Endothelial cell of umbilical vein (primary cell): ENCODE measurements at regions of chr12 and their contacts with region 1.

Region 1: DNA sequence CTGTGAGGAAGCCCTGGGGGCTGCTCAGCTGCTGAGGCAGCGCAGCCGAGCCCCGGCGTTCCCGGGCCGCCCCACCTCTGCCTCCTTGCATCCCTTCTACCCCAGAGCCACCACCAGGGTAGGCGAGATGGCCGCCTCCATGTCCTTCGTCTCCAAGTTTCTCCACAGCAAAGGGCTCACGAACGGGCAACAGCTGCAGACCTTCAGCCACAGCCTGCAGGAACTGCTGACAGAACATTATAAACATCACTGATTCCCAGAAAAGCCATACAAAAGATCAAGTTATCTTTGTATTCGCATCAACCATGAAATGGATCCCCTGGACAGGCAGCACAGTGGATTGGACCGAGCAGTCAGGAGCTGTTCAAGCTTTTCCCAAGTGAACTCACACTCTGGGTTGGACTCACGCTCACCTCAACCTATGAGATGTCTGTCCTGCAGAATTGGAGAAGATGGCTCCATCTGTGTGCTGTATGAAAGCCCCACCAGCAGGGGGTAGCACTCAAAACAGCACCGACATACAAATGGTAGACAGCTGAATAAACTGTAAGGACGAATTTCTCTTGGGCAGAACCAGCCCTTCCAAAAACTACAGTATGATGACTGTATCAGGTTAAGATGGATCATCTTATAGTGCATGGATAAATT is 19.4 kb upstream of the A2M start:
- DNase-seq: peak; percentile 11
- H3K4me3 ChIP-seq: no peak overlapping the region
- H3K27ac ChIP-seq: no peak overlapping the region
- H3K4me1 ChIP-seq: no peaks in the 10 kb centered on the region
- H3K27me3 ChIP-seq: peaks cover 2 to 3% of the 10 kb centered on the region in 2 experiments
- CTCF ChIP-seq: peak; percentile 35 to 39
- POLR2A ChIP-seq: no peak

Region 2: DNA sequence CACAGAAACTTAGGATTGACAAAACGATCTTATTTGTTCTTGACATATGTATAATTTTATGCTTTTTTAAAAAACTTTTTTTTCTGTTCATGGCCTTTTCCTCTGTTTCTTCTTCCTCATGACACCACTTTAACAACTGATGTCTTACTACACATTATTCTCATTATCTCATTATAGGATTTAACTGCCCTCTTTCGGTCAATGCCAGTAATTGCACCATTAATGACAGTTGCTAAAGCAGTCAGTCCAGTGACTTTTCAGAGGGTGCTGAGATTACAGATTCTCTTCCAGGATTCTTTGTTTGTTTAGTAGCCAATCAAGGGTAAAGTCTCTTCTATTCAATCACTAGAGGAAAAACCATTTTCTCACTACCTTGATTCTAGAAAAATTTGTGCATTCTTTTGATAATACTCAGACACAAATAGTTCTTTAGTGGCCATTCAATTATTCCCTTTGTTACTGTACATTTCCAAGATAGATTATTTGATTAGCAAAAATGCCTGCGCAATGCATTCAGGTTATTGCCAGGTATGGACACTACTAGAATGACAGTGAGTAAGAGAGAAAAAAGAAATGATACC is 95.6 kb before region 1 on chr12:
- CTCF ChIA-PET with region 1: no interaction called
- POLR2A ChIA-PET with region 1: no interaction called
- dilution Hi-C with region 1: no loop called
- intact Hi-C with region 1: no loop called
- DNase-seq: peak; percentile 63
- H3K4me3 ChIP-seq: no peak overlapping the region
- H3K27ac ChIP-seq: no peak overlapping the region
- H3K4me1 ChIP-seq: no peaks in the 10 kb centered on the region
- H3K27me3 ChIP-seq: peaks cover 7 to 8% of the 10 kb centered on the region in 2 experiments
- CTCF ChIP-seq: peak; percentile 47 to 54
- POLR2A ChIP-seq: no peak

Region 3: DNA sequence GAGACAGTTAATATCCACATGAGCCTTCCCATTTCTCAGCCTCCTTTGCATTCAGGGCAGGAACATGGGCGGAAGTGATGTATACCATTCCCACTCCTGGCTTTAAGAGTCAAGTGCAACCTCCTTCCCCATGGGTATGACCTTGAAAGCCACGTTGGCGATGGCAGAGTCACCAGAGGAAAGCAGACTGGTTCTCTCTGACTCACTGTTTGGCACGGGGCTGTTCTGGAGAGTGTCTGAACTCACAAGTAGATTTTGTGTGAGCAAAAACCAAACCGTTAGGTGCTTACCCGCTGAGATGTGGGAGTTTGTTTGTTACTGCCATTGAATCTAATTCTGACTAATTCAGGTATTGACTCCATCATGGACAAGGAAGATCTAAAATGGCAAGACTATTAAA is 109.8 kb after region 1 on chr12:
- CTCF ChIA-PET with region 1: no interaction called
- POLR2A ChIA-PET with region 1: no interaction called
- dilution Hi-C with region 1: no loop called
- intact Hi-C with region 1: loop called (anchors 5 kb)
- DNase-seq: no peak
- H3K4me3 ChIP-seq: no peak overlapping the region
- H3K27ac ChIP-seq: no peak overlapping the region
- H3K4me1 ChIP-seq: no peaks in the 10 kb centered on the region
- H3K27me3 ChIP-seq: peaks cover 3 to 7% of the 10 kb centered on the region in 2 experiments
- CTCF ChIP-seq: no peak
- POLR2A ChIP-seq: no peak